Activated T-helper 2 cell treated with anti-CD3 and anti-CD28 coated beads, Interferon-gamma antibody, Interleukin-2, Interleukin-4, amounts not matched to agents 10 μg/mL and 5 μg/mL and 100 μg/mL, durations not matched to agents 14 hours and 24 hours and 36 hours (primary cell): ENCODE measurements at regions of chr9 and their contacts with region 1.

Region 1: DNA sequence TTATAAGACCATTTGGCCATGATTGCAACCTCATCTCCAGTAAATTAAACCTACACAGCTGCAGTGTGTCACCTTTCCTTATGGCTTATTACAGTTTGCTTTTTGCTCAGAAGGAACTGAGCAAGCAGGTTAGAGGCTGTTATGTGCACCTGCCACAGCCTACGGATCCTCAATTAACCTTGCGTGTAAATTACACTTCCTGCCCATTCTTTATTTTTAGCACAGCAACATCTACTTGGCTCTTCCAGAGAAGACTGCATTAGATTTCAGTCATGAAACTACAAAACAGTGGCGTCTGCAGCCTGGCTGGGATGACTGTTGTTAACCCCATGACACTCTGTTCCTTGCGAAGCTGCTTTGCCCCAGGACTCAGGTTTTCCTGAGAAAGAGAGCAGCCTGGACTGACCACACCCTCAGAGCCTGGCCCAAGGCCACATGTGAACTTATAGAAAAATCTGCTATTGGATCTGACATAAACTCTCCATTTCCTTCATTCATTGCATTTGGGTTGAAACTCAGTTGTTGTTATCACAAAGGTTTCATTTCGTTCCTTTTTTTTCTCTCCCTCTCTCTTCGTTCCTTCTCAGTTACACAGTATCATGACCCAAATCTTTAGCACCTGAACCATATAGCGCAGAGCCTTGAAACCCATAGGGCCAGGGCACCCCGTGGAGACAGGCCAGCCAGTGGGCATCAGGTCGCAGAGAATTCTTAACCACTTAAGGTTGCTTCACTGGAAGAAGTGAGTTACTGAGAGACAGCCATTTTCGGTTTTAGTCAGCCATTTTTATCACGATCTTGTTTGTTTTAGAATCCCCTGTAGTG is 138.6 kb downstream of the PALM2AKAP2 start:
- DNase-seq: peak; percentile 56
- H3K4me3 Mint-ChIP-seq: peak overlapping the region; percentile 84
- H3K27ac Mint-ChIP-seq: peak overlapping the region; percentile 100
- H3K4me1 Mint-ChIP-seq: peaks cover 61% of the 10 kb centered on the region
- H3K27me3 Mint-ChIP-seq: no peaks in the 10 kb centered on the region

Region 2: DNA sequence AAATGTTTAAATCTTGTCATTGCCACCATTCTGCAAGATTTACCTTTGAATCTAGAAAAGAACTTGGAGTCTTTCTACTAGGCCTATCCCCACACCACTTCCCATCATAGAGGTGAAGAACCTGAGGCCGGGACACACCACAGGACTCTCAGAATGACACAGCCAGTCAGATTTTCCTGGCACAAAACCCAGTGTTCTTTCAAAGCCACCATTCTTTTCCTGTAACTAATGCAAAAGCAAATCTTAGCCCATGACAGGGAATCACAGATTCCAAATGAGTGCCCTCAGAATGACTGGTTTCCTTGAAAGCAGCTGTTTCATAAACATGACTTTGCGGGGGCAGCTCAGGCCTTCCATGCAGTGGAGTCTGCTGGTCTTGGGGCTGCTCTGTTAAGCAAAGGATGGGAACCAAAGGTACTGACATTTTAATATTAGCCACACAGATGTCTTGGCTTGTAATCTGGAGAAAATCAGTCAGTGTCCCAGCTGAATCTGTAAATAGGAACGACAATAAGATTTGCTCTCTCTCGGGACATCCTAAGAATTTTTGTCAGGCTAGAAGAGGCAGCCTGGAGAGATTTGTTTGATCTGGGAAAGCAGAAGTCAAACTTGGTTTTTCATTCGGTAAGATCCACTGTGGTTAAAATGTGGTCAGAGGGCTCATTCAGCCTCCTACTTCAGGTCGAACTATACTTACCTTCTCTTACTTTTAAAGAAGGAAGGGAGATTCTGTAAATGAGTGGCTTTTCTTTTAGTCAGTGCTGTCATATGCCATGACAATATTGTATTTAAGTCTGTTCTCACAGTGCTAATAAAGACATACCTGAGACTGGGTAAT is 23.4 kb before region 1 on chr9:
- intact Hi-C with region 1: loop called (anchors 1 kb)
- DNase-seq: no peak
- H3K4me3 Mint-ChIP-seq: peak overlapping the region; percentile 50
- H3K27ac Mint-ChIP-seq: peak overlapping the region; percentile 91
- H3K4me1 Mint-ChIP-seq: peaks cover 45% of the 10 kb centered on the region
- H3K27me3 Mint-ChIP-seq: no peaks in the 10 kb centered on the region

Region 3: DNA sequence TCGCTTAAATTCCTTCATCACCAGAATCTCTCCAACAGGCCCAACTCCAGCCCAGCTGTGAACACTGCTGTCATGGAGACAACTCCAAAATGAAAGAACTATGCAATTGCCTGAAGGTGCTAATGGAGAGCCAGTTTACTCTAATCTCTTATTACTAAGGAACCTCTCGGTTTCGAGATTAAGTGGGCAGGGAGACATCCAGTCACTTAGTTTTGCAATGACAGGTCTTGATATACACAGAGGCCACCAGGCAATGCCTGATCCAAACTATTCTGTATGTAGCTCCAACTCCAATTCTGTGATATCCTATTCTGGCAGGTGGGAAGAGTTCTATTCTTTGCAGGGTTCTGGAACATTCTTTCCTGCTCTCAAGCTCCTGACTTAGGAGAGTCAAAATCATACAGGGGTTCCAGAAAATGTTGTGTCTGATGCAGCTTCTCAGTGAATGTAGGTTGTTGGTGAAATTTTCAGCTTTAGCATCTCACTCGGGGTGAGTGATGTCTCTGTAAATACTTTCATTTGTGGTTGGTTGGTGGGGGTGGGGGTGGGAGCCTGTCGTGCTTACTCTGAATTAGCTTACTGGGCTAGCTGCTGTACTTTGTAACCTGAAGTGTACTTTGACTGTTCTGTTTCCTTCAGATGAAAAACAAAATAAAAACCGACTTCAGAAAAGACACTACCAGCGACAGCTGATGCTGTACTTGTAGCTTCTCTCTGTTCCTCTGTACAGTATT is 32.3 kb after region 1 on chr9:
- intact Hi-C with region 1: loop called (anchors 1 kb)
- DNase-seq: no peak
- H3K4me3 Mint-ChIP-seq: peak overlapping the region; percentile 57
- H3K27ac Mint-ChIP-seq: peak overlapping the region; percentile 93
- H3K4me1 Mint-ChIP-seq: peaks cover 43% of the 10 kb centered on the region
- H3K27me3 Mint-ChIP-seq: no peaks in the 10 kb centered on the region

Region 4: GRCh38 chr9:110048403-110048975 is 129.9 kb after region 1 on chr9:
- intact Hi-C with region 1: loop called (anchors 1 kb)
- DNase-seq: peak; percentile 85
- H3K4me3 Mint-ChIP-seq: peak overlapping the region; percentile 94
- H3K27ac Mint-ChIP-seq: peak overlapping the region; percentile 94
- H3K4me1 Mint-ChIP-seq: peaks cover 42% of the 10 kb centered on the region
- H3K27me3 Mint-ChIP-seq: no peaks in the 10 kb centered on the region

Region 5: GRCh38 chr9:110152704-110153374 is 234.3 kb after region 1 on chr9:
- intact Hi-C with region 1: loop called (anchors 1 kb)
- DNase-seq: no peak
- H3K4me3 Mint-ChIP-seq: peak overlapping the region; percentile 37
- H3K27ac Mint-ChIP-seq: peak overlapping the region; percentile 77
- H3K4me1 Mint-ChIP-seq: peaks cover 95% of the 10 kb centered on the region
- H3K27me3 Mint-ChIP-seq: no peaks in the 10 kb centered on the region